Natural killer cell (primary cell): ENCODE measurements at regions of chr7 and their contacts with region 1.

Region 1: DNA sequence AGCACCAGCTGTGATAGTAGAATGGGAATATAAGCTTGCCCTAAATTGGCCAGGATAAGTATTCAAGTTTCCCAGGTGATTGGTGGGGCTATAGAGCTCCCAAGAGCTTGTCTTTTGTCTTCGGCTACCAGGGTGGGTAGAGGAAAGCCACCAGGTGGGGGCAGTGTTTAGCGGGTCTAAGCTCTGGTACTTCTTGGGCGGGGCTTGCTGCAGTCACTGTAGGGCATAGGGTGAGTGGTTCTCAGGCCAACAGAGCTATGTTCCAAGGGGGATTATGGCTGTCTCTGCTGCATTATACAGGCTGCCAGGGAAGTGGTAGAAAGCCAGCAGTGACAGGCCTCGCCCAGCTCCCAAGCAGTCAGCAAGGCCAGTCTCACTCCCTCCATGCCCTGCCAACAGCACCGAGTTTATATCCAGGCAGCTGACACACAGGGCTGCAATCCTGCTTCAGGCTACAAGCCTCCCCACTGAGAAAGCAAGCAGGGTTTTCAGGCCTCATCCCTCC is 110.7 kb downstream of the ZNF467 start:
- DNase-seq: peak; percentile 50 to 75
- ATAC-seq: peak; percentile 87 to 93 (median 88)
- H3K4me3 ChIP-seq: no peak overlapping the region
- H3K4me3 Mint-ChIP-seq: no peak overlapping the region
- H3K27ac ChIP-seq: no peak overlapping the region
- H3K27ac Mint-ChIP-seq: no peak overlapping the region
- H3K4me1 ChIP-seq: no peaks in the 10 kb centered on the region
- H3K4me1 Mint-ChIP-seq: no peaks in the 10 kb centered on the region
- H3K27me3 ChIP-seq: no peaks in the 10 kb centered on the region
- H3K27me3 Mint-ChIP-seq: peaks cover 27 to 67% of the 10 kb centered on the region in 2 donors
- CTCF ChIP-seq: peak; percentile 57

Region 2: GRCh38 chr7:149742075-149742701 is 79.5 kb after region 1 on chr7:
- intact Hi-C with region 1: loop called (anchors 1 kb)
- DNase-seq: peak; percentile 55 to 73
- ATAC-seq: peak; percentile 58 to 82 (median 72)
- H3K4me3 ChIP-seq: peak overlapping the region; percentile 24
- H3K4me3 Mint-ChIP-seq: peak overlapping the region; percentile 77
- H3K27ac ChIP-seq: no peak overlapping the region
- H3K27ac Mint-ChIP-seq: no peak overlapping the region
- H3K4me1 ChIP-seq: peaks cover 11% of the 10 kb centered on the region
- H3K4me1 Mint-ChIP-seq: peaks cover 10% of the 10 kb centered on the region in 2 donors
- H3K27me3 ChIP-seq: peaks cover 5% of the 10 kb centered on the region
- H3K27me3 Mint-ChIP-seq: peaks cover 35 to 44% of the 10 kb centered on the region in 2 donors
- CTCF ChIP-seq: peak; percentile 93

Region 3: GRCh38 chr7:149799397-149800171 is 136.9 kb after region 1 on chr7:
- intact Hi-C with region 1: loop called (anchors 5 kb)
- DNase-seq: peak; percentile 26 to 77
- ATAC-seq: peak in 1 of 3 donors; percentile 58
- H3K4me3 ChIP-seq: no peak overlapping the region
- H3K4me3 Mint-ChIP-seq: no peak overlapping the region
- H3K27ac ChIP-seq: no peak overlapping the region
- H3K27ac Mint-ChIP-seq: peak overlapping the region in 1 of 2 donors; percentile 47
- H3K4me1 ChIP-seq: no peaks in the 10 kb centered on the region
- H3K4me1 Mint-ChIP-seq: no peaks in the 10 kb centered on the region
- H3K27me3 ChIP-seq: no peaks in the 10 kb centered on the region
- H3K27me3 Mint-ChIP-seq: no peaks in the 10 kb centered on the region
- CTCF ChIP-seq: peak; percentile 36